ENCODE measurements at regions of chr4 and their contacts with region 1.

Region 1: DNA sequence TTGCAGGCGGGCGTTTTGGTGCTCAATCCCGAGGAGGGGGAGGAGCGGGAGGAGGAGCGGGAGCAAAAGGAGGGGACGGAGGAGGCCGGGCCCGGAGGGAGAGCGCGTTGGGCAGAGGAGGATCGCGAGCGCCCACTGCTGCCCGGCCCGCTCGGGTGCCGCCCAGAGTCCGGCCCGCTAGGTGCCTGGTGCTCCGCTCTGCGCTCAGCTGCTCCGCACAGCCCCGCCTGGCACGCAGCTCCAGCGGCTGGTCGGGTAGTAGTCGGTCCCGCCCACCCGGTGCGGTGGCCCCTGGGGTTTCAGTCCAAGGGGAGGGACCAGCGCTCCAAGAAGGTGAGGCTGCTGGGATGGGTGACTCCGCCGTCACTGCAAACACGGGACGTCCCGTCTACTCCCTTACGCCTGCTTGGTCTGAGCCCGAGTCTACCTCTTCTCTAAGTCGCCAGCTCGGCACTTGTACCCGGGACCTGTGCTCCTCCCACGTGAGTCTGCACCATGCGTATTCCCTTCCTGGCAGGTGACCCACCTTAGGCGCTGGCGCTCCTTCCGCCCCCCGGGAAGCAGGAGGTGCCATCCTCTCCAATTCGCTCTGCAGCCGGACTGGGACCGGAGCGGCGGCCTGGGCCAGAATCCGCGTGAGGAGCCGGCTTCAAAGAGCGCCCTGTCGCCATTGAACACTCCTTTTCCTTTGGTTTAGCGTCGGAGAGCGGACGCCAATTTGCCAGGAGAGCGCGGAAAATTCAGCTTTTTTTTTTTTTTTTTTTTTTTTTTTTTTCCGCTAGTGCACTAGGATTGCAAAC is 405 bp upstream of the HS3ST1 start:
- DNase-seq: peak; percentile 96
- H3K4me3 ChIP-seq: peak overlapping the region; percentile 78 to 83 (median 82)
- H3K27ac ChIP-seq: peak overlapping the region; percentile 84
- H3K4me1 ChIP-seq: peaks cover 39% of the 10 kb centered on the region
- H3K27me3 ChIP-seq: no peaks in the 10 kb centered on the region
- CTCF ChIP-seq: peak; percentile 62 to 95

Region 2: DNA sequence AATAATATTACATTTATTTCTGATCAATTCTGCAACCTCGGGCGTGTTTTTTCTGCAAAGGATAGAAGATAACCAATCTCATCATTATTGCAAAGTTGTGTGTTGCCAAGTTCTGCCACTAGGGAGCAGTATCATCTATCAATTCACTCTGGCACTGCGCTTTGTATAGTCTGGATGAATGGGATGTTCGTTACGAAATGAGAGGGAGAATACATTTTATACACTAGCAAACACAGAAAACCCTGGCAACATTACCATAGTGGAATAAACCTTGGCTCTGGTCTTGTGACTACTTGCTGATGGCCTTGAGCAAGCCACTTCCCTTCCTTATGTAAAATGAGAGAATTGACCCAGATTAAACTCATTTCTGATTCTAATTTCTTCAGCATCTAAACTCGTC is 874.4 kb before region 1 on chr4:
- CTCF ChIA-PET with region 1: no interaction called
- dilution Hi-C with region 1: no loop called
- in situ Hi-C with region 1: no loop called
- intact Hi-C with region 1: loop called (anchors 10 kb)
- DNase-seq: peak; percentile 61
- H3K4me3 ChIP-seq: no peak overlapping the region
- H3K27ac ChIP-seq: no peak overlapping the region
- H3K4me1 ChIP-seq: no peaks in the 10 kb centered on the region
- H3K27me3 ChIP-seq: no peaks in the 10 kb centered on the region
- CTCF ChIP-seq: peak; percentile 79 to 82

Region 3: DNA sequence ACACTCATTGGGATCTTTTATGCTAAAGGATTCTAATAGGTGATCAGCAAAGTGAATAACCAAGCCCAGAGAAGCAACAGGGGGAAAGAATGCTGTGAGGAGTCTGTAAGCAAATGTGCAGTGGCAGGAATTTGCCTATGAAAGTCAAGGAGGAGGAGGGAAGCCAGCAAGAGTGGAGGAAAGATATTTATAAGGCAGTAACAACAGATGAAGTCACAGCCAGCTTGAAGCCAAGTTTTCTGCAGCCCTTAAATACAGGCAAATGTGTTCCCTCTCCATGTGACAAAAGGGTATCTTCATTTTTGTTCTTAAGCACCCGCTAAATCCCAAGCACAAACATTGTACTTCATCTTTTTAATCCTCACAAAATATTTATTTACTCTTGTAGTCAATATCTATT is 469.5 kb before region 1 on chr4:
- CTCF ChIA-PET with region 1: no interaction called
- dilution Hi-C with region 1: no loop called
- in situ Hi-C with region 1: no loop called
- intact Hi-C with region 1: loop called (anchors 5 kb)
- DNase-seq: no peak
- H3K4me3 ChIP-seq: no peak overlapping the region
- H3K27ac ChIP-seq: no peak overlapping the region
- H3K4me1 ChIP-seq: peaks cover 3% of the 10 kb centered on the region
- H3K27me3 ChIP-seq: no peaks in the 10 kb centered on the region
- CTCF ChIP-seq: no peak

Region 4: DNA sequence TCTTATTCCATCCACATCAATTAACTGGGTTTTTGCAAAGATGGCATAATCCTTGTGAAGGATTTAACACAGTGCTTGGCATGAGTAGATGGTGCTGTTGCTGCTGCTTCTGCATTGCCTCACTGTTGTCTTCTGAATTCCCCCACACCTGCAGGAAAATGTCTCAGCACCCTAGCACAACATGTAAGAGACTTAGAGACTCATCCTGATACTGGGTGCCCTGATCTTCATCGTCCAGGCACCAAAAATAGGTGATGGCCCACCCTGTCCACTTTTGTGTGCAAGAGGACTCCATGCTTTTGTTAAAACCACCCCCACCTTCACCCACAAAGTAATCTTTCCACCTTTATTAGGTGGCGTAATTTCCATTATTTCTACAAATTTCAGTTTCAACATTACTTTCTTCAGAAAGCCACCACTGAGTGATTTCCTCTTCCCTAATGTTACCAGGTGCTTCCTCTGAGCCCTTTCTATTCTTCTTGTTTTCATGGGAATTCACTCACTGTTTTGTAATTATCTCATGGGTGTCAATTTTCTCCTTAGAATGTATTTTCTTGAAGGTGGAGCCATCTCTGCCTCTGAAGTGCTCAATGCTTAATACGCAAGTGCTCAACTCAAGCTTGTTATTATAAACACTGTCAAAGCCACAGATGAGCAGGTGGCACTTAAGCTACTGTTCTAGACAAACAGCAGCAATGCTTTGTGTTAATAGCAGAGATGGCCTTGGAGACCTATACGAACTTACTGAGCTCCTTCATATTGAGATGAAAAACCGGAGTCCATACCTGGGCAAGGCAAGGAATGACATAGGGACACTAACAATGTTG is 89.9 kb before region 1 on chr4:
- CTCF ChIA-PET with region 1: no interaction called
- dilution Hi-C with region 1: no loop called
- in situ Hi-C with region 1: no loop called
- intact Hi-C with region 1: no loop called
- DNase-seq: no peak
- H3K4me3 ChIP-seq: no peak overlapping the region
- H3K27ac ChIP-seq: no peak overlapping the region
- H3K4me1 ChIP-seq: no peaks in the 10 kb centered on the region
- H3K27me3 ChIP-seq: no peaks in the 10 kb centered on the region
- CTCF ChIP-seq: no peak

Region 5: DNA sequence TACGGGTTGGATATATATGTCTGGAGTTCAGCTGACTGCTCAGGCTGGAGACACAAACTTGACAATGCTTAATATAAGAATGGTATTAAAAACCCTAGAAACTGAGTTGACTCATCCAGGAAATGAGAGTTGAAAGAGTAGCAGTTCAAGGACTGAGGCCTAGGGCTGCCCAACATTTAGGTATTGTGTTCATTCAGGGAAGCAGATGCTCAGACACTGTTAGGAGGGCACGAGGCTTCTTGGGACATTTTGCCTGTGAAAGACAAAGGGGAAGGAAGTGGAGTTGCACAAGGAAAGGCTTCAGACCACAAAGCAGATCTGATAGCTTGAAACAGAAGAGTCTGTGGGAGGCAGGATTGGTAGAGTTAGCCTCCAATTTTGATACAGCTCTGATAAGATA is 51.6 kb after region 1 on chr4:
- CTCF ChIA-PET with region 1: no interaction called
- dilution Hi-C with region 1: loop called (anchors 5 kb)
- in situ Hi-C with region 1: no loop called
- intact Hi-C with region 1: no loop called
- DNase-seq: no peak
- H3K4me3 ChIP-seq: no peak overlapping the region
- H3K27ac ChIP-seq: no peak overlapping the region
- H3K4me1 ChIP-seq: peaks cover 21% of the 10 kb centered on the region
- H3K27me3 ChIP-seq: no peaks in the 10 kb centered on the region
- CTCF ChIP-seq: no peak

Region 6: GRCh38 chr4:11623726-11624037 is 194.6 kb after region 1 on chr4:
- CTCF ChIA-PET with region 1: no interaction called
- dilution Hi-C with region 1: no loop called
- in situ Hi-C with region 1: loop called in 1 of 2 experiments (anchors 10 kb)
- intact Hi-C with region 1: loop called (anchors 1 kb)
- DNase-seq: peak; percentile 57
- H3K4me3 ChIP-seq: no peak overlapping the region
- H3K27ac ChIP-seq: peak overlapping the region; percentile 91
- H3K4me1 ChIP-seq: peaks cover 60% of the 10 kb centered on the region
- H3K27me3 ChIP-seq: no peaks in the 10 kb centered on the region
- CTCF ChIP-seq: peak in 1 of 2 donors; percentile 72

Region 7: GRCh38 chr4:12633053-12633651 is 1204.1 kb after region 1 on chr4:
- CTCF ChIA-PET with region 1: no interaction called
- dilution Hi-C with region 1: no loop called
- in situ Hi-C with region 1: no loop called
- intact Hi-C with region 1: loop called (anchors 5 kb)
- DNase-seq: peak; percentile 61
- H3K4me3 ChIP-seq: no peak overlapping the region
- H3K27ac ChIP-seq: no peak overlapping the region
- H3K4me1 ChIP-seq: no peaks in the 10 kb centered on the region
- H3K27me3 ChIP-seq: no peaks in the 10 kb centered on the region
- CTCF ChIP-seq: peak; percentile 92 to 97